Activated CD4-positive, alpha-beta T cell treated with anti-CD3 and anti-CD28 coated beads for 36 hours (primary cell): ENCODE measurements at regions of chr2 and their contacts with region 1.

Region 1: GRCh38 chr2:26235085-26235484 is 9.3 kb downstream of the HADHA start:
- DNase-seq: no peak
- ATAC-seq: no peak
- H3K4me3 Mint-ChIP-seq: no peak overlapping the region
- H3K27ac Mint-ChIP-seq: no peak overlapping the region
- H3K4me1 Mint-ChIP-seq: peaks cover 8% of the 10 kb centered on the region
- H3K27me3 Mint-ChIP-seq: no peaks in the 10 kb centered on the region

Region 2: DNA sequence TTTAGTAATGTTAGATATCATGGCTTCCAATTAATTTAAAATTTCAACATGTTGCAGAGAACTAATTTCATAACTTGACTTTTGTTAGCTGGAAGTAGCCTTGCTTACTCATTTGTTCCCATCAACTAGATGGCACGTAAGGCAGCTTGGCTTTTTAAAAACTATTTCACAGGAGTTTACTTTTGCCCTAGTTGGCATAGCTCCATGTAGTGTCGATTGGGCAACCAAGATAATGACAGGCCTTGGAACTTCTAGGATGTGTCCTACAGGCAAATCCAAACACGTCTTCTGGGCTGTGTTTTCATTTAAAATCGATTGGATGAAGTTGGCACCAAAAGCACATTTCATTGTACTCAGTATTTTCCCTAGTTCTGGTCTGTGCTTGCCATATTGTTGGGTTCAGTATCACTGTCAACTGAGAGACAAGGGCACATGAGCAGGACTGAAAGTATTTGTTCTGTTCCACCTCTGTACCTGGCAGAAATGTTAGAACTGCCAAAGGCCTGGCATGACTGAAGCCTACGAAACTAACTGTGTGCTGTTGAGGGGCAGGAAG is 39.1 kb after region 1 on chr2:
- CTCF ChIA-PET with region 1: interaction called, 10 read pairs
- POLR2A ChIA-PET with region 1: no interaction called
- intact Hi-C with region 1: no loop called
- DNase-seq: no peak
- ATAC-seq: no peak
- H3K4me3 Mint-ChIP-seq: no peak overlapping the region
- H3K27ac Mint-ChIP-seq: no peak overlapping the region
- H3K4me1 Mint-ChIP-seq: peaks cover 17% of the 10 kb centered on the region
- H3K27me3 Mint-ChIP-seq: no peaks in the 10 kb centered on the region